ENCODE measurements at regions of chr18 and their contacts with region 1.

Region 1: GRCh38 chr18:78073275-78073674 is 823.6 kb downstream of the GALR1 start:
- DNase-seq: no peak
- H3K4me3 ChIP-seq: peak overlapping the region in 3 of 59 donors; percentile 8 to 28 (median 12)
- H3K27ac ChIP-seq: no peak overlapping the region
- H3K27me3 ChIP-seq: peaks cover 0 to 8% (median 0%) of the 10 kb centered on the region in 45 donors
- CTCF ChIP-seq: peak in 55 of 56 donors; percentile 21 to 78 (median 59)

Region 2: DNA sequence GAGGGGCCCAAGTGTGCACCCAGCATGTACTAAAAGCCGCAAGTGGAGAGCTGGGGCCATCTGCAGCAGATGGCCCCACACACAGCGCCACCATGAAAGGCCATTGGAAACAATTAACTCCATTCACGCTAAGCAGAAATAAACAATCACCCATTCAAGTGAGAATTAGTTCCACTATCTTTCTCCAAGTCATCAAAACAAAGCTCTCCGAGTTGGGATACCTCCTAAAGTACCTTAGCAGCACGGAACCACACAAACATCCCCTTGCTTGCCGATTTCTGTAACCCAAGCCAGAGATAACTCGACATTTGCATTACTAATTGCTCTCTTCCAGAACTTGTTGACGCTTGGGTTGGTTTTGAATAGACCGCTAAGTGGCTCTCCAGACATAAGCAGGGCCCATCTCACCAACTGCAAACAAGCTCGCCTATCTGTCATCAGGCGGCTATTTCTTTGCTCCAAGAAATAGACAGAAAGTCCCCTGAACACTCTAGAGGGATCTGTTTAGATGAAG is 65.8 kb after region 1 on chr18:
- intact Hi-C with region 1: loop called in 1 of 2 experiments (anchors 5 kb)
- DNase-seq: peak in 1 of 10 donors; percentile 46
- H3K4me3 ChIP-seq: peak overlapping the region in 38 of 59 donors; percentile 4 to 58 (median 31)
- H3K27ac ChIP-seq: peak overlapping the region in 31 of 59 donors; percentile 11 to 84 (median 44)
- H3K27me3 ChIP-seq: peaks cover 0 to 6% (median 0%) of the 10 kb centered on the region in 45 donors
- CTCF ChIP-seq: peak in 19 of 56 donors; percentile 5 to 57 (median 28)

Region 3: DNA sequence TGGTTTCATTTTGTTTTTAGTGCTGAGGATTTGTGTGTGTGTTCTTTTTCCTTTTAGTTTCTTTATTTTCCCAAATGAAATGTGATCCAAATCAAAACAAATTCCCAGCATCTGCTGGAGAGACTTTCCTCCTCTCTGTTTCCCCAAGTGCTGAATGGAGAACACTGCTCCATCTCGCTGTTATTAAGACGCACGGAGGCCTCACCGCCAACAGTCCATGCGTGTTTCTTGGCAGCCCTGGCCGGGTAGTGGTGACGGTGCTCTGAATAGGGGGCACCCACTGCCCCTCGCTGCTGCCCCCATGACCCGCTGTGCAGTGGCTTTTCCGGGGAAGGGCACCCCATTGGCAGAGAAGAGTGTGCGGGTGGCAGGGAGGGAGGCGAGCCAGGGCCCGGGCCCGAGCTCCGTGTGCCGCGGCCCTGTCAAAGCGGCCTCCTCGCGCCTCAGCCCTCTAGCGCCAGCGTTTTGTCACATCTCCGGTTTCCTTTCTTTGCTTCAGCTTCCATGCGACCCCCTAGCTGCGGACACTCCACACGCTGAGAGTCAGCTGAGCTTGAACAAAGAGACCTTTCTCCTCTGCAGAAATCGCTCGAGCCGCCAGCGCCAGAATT is 432.7 kb after region 1 on chr18:
- intact Hi-C with region 1: loop called in 1 of 2 experiments (anchors 5 kb)
- DNase-seq: peak in 6 of 10 donors; percentile 26 to 66 (median 51)
- H3K4me3 ChIP-seq: peak overlapping the region in 57 of 59 donors; percentile 4 to 65 (median 39)
- H3K27ac ChIP-seq: peak overlapping the region in 18 of 59 donors; percentile 17 to 69 (median 40)
- H3K27me3 ChIP-seq: peaks cover 0 to 14% (median 0%) of the 10 kb centered on the region in 45 donors
- CTCF ChIP-seq: peak in 41 of 56 donors; percentile 13 to 63 (median 35)

Region 4: GRCh38 chr18:78984941-78985784 is 911.9 kb after region 1 on chr18:
- intact Hi-C with region 1: loop called in 1 of 2 experiments (anchors 5 kb)
- DNase-seq: peak in 2 of 10 donors; percentile 18 to 36
- H3K4me3 ChIP-seq: peak overlapping the region in 46 of 59 donors; percentile 1 to 53 (median 30)
- H3K27ac ChIP-seq: peak overlapping the region in 34 of 59 donors; percentile 1 to 70 (median 25)
- H3K27me3 ChIP-seq: peaks cover 8 to 100% (median 82%) of the 10 kb centered on the region in 45 donors
- CTCF ChIP-seq: peak in 11 of 56 donors; percentile 9 to 19 (median 12)

Measured in dorsolateral prefrontal cortex (tissue), 120 donors.